Aorta (tissue), 5 donors: ENCODE measurements at regions of chr2 and their contacts with region 1.

Region 1: DNA sequence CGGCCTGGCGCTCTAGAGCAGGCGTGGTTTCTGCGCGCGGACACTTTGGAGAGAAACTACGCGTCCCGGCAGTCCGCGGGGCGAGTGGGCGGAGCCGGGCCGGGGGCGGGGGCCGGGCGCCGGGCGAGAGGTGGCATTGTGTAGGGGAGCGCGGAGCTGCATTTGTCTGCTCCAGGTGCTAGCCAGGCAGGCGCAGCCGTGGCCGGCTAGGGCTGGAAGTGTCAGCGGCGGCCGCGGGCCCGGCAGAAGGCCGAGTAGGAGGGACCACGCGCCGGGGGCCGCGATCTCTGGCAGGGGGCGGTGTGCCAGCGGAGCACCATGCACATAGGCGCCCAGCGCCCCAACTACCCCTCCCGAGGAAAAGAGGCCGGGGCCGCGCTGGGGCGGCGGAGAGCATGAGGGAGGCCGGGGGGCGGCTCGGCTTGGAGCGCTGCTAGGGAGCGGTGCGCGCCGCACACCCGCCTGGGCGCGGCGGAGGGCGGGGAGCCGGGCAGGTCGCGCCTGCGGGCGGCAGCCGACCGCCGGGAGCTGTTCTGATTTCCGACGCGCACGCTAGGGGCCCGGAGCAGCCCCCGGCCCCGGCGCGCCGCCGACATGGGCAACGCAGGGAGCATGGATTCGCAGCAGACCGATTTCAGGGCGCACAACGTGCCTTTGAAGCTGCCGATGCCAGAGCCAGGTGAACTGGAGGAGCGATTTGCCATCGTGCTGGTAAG is at the start of gene FMNL2:
- DNase-seq: peak; percentile 89 to 94
- ATAC-seq: peak; percentile 90
- H3K4me3 ChIP-seq: peak within 1 kb of the TSS; percentile 88 to 98
- H3K27ac ChIP-seq: peak within 1 kb of the TSS; percentile 31 to 38
- H3K4me1 ChIP-seq: no peaks in the 10 kb centered on the region
- H3K27me3 ChIP-seq: no peaks in the 10 kb centered on the region
- total RNA-seq, gene FMNL2: 53.2 to 55.1 TPM

Region 2: DNA sequence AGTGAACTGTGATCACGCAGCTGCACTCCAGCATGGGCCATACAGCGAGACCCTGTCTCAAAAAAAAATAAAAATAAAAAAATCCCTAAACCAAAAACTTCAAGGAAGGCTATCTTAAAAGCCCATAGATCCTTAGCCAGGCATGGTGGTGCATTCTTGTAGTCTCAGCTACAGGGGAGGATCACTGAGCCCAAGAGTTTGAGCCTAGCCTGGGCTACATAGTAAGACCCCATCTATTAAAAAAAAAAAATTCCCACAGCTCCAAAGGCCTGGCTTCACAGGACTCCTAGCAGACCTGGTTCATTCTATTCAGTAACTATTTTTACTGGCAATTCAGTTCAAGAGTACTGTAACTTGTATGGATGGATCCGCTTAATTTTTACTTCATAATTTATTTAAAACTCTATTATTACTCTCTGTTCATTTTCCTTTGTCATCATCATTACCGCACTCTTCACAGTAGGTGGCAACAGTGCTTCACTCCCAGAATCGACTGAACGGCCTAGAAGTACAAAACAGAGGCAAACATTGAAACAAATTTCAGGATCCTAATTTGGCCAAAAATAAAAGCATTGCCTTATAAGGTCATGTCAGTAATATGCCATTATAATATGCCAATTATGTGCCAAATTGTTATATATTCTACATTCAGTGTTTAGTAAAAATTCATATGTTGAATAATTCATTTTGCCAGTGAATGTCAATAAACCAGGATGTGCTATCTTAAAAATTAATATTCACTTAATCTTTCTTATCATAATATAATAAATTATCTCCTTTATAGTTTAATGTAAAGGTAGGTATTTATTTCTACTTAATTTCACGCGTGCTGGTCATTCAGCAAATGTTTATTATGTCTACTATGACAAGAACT is 145.3 kb before region 1 on chr2:
- intact Hi-C with region 1: loop called in 1 of 2 experiments (anchors 10 kb)
- DNase-seq: no peak
- ATAC-seq: peak; percentile 84
- H3K4me3 ChIP-seq: no peak overlapping the region
- H3K27ac ChIP-seq: no peak overlapping the region
- H3K4me1 ChIP-seq: no peaks in the 10 kb centered on the region
- H3K27me3 ChIP-seq: no peaks in the 10 kb centered on the region

Region 3: DNA sequence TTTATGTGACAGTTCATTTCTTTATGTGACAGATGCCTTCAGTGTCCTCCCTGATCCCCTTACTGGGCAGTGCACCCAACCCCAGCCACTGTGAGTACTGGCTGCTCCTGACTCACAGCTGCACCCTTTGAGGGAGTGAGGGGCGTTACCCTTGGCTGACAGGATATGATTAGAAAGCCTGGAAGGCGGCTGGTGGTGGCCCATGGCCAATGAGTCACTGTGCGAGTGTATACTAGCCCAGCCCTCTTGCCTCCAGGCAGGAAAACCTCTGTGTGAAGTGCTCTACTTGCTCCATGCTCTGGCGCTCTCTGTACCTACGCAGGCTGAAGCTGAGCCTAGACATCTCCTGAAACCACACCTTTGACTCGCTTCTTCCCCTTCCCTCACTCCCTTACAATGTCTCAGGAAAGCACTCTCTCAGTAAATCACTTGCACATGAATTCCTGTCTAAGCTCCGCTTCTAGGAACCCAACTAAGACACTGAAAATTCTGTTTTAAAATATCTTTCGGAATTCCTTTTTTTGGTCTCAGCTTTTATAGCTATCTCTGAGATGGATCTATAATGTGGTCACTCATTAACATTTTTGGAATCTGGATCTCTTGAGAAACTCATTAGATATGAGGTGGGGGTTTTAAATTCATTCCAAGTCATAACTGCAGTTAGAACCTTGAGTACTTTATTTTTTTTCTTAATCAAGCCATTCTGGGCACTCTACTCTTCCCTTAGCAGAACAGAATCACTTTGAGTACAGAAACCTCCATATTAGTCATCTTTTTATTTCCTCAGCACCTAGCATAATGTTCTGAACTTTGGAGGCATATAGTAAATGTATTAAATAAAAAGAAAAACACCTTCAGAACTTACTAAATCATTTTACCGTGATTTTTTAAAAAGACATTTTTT is 134.4 kb before region 1 on chr2:
- intact Hi-C with region 1: loop called (anchors 10 kb)
- DNase-seq: peak; percentile 95 to 96
- ATAC-seq: peak; percentile 96
- H3K4me3 ChIP-seq: no peak overlapping the region
- H3K27ac ChIP-seq: no peak overlapping the region
- H3K4me1 ChIP-seq: no peaks in the 10 kb centered on the region
- H3K27me3 ChIP-seq: no peaks in the 10 kb centered on the region

Region 4: DNA sequence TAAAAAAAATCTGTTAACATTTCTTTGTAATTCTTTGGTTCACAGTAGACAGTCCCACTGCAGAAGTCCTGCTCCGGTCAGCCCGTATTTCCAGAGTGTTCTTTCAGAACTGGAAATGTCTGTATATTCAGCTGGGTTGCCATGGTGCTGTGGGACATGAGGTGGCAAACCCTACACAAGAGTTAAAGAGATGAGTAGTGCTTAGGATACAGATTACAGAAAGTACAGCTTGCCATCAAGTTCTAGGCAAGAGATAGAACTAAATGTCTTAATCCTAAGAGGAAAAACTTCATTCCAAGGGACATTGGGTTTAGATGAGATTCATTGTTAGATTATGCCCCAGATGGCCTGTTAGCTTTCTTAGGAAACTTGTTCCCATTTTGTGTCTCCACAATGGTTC is 59.9 kb after region 1 on chr2:
- intact Hi-C with region 1: loop called (anchors 5 kb)
- DNase-seq: no peak
- ATAC-seq: peak; percentile 40
- H3K4me3 ChIP-seq: no peak overlapping the region
- H3K27ac ChIP-seq: peak overlapping the region; percentile 72 to 87
- H3K4me1 ChIP-seq: peaks cover 3 to 5% of the 10 kb centered on the region in 2 donors
- H3K27me3 ChIP-seq: no peaks in the 10 kb centered on the region

Region 5: GRCh38 chr2:152549423-152549822 is 214.3 kb after region 1 on chr2:
- intact Hi-C with region 1: loop called in 1 of 2 experiments (anchors 5 kb)
- DNase-seq: no peak
- ATAC-seq: no peak
- H3K4me3 ChIP-seq: no peak overlapping the region
- H3K27ac ChIP-seq: no peak overlapping the region
- H3K4me1 ChIP-seq: peaks cover 2 to 7% of the 10 kb centered on the region in 2 donors
- H3K27me3 ChIP-seq: no peaks in the 10 kb centered on the region

Region 6: DNA sequence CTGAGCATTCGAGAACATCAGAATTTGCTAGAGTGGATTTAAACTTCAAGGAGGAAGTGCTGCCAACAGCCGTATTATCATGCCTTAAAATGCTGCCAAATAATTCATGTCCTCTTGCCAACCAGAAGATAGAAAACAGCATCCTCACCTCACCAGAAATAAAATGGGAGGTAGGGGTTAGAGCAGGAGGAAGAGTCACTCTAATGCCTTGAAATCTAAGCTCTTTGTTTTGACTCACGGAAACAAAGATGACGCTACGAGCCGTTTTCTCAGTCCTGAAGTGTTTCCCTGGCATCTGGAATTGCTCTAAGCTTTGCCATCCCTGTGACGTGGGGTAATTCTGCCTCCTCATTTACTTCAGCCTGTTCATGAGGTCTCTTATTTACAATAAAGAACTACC is 285.0 kb after region 1 on chr2:
- intact Hi-C with region 1: loop called in 1 of 2 experiments (anchors 5 kb)
- DNase-seq: no peak
- ATAC-seq: no peak
- H3K4me3 ChIP-seq: no peak overlapping the region
- H3K27ac ChIP-seq: no peak overlapping the region
- H3K4me1 ChIP-seq: peaks cover 0 to 4% of the 10 kb centered on the region in 2 donors
- H3K27me3 ChIP-seq: no peaks in the 10 kb centered on the region

Region 7: GRCh38 chr2:152635635-152636298 is 300.6 kb after region 1 on chr2:
- intact Hi-C with region 1: loop called in 1 of 2 experiments (anchors 10 kb)
- DNase-seq: peak; percentile 64 to 77
- ATAC-seq: peak; percentile 76
- H3K4me3 ChIP-seq: no peak overlapping the region
- H3K27ac ChIP-seq: no peak overlapping the region
- H3K4me1 ChIP-seq: no peaks in the 10 kb centered on the region
- H3K27me3 ChIP-seq: no peaks in the 10 kb centered on the region